ENCODE measurements at regions of chr14 and their contacts with region 1.

Region 1: DNA sequence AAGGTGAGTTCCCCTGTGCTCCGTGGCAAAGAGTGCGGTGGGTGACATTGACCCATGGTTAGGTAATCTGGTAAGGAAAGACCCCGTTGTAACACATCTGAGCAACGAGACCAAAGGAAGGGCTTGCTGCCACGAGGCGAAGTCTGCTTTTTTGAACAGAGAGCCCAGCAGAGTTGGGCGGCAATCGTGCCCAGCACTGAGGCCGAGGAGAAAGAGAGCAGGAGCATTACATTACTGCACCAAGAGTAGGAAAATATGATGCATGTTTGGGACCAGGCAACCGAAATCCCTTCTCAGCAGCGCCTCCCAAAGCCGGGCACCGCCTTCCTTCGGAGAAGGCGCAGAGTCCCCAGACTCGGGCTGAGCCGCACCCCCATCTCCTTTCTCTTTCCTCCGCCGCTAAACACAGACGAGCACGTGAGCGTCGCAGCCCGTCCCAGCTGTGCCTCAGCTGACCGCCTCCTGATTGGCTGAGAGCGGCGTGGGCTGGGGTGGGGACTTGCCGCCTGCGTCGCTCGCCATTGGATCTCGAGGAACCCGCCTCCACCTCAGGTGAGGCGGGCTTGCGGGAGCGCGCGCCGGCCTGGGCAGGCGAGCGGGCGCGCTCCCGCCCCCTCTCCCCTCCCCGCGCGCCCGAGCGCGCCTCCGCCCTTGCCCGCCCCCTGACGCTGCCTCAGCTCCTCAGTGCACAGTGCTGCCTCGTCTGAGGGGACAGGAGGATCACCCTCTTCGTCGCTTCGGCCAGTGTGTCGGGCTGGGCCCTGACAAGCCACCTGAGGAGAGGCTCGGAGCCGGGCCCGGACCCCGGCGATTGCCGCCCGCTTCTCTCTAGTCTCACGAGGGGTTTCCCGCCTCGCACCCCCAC is at the start of gene HIF1A:
- DNase-seq: peak; percentile 99
- H3K4me3 ChIP-seq: peak within 1 kb of the TSS; percentile 91
- H3K27ac ChIP-seq: peak within 1 kb of the TSS; percentile 74
- H3K4me1 ChIP-seq: peaks cover 37% of the 10 kb centered on the region
- CTCF ChIP-seq: peak; percentile 40; the same call in 1 of the 2 replicates
- total RNA-seq, gene HIF1A: 59.5 and 71.7 TPM in 2 replicates

Region 2: DNA sequence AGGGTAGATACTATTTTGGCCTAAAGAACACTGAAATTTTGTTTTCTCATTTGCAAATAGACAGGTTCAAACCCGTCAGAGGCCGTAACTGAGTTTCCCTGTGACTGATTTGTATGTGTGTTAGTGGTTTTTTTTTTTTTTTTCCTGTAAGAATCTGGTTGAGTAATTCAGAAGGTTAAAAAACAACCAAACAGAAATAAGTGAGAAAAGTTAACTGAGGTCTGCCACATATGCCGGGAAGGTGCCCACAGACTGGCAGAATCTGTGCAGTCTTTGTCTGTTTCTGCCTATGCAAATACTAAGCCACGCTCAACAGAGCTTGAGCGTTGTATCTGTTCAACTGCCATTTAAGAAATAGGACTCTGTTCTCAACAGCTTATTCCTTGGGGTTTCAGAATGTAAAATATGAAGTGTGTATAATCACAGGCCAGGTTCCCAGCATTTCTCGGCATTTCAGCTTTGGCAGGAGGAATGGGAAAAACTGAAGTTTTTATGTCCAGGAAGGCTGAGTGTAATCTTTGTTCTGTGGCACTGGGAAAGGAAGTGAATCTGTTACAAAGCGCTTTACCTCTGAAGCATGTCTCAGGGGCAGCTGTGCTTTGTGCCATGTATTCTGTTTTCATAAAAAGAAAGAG is 191.8 kb before region 1 on chr14:
- CTCF ChIA-PET with region 1: no interaction called
- POLR2A ChIA-PET with region 1: interaction called, 27 read pairs
- intact Hi-C with region 1: loop called (anchors 2 kb)
- DNase-seq: peak; percentile 94
- H3K4me3 ChIP-seq: peak overlapping the region; percentile 52
- H3K27ac ChIP-seq: peak overlapping the region; percentile 99
- H3K4me1 ChIP-seq: peaks cover 99% of the 10 kb centered on the region
- CTCF ChIP-seq: no peak; the same call in 1 of the 2 replicates

Region 3: DNA sequence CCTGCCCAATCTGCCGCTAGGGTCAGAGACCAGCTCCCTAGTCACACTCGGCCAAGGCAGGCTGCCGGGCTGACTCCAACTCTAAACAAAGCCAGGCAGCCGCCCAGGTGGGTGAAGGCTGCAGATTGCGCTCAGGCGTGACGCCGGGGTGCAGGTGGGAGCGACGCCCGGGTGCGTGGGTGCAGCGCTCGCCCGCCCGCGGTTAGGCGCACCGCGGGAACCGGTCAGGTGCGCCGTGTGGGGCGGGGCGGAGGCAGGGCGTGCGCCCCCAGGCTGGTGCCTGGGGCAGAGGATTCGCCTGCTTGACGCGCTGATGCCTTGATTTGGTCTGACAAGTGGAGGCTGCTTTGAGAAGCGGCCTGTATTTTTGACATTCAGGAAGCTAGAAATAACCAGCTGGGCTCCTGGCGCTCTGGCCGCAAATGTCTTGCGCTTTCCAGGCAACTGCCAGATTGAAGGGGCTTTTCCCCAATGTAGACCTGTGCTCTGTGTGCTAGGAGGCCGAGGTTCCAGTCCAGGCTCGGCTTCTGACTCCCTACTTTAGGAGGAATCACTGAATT is 126.4 kb before region 1 on chr14:
- CTCF ChIA-PET with region 1: no interaction called
- POLR2A ChIA-PET with region 1: interaction called, 7 read pairs
- intact Hi-C with region 1: loop called (anchors 1 kb)
- DNase-seq: peak; percentile 98
- H3K4me3 ChIP-seq: peak overlapping the region; percentile 53
- H3K27ac ChIP-seq: peak overlapping the region; percentile 93
- H3K4me1 ChIP-seq: peaks cover 77% of the 10 kb centered on the region
- CTCF ChIP-seq: peak; percentile 65

Region 4: DNA sequence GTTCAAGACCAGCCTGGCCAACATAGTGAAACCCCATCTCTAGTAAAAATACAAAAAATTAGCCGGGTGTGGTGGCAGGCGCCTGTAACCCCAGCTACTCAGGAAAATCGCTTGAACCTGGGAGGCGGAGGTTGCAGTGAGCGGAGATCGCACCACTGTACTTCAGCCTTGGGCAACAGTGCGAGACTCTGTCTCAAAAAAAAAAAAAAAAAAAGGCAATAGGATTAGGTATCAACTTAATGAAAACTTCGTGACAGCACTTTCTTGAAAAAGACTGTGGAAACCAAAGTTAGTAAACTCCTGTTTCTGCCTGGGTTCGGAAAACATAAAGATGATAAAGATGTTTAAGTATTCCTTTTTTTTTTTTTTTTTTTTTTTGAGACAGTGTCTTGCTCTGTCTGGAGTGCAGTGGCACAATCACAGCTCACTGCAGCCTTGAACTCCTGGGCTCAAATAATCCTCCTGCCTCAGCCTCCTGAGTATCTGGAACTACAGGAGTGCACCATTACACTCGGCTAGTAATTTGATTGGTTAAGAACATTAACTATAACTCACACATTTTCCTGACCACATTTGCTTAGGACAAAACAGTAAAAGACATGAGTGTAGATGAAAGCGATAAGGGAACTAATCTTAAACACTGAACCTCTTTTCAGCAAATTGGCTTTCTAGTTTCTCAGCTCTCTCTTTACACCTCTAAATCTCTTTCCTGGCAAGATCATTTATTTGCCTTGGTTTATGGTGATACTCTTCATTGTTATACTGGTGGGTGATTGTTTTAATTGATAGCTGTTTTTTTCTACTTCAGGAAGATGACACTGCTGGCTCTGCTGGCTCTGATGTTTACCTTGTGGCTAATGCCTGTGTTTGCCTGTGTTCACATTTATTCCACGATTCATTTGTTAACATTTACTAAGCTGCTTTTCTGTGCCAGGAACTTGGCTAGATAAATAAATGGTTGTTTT is 16.1 kb after region 1 on chr14:
- CTCF ChIA-PET with region 1: no interaction called
- POLR2A ChIA-PET with region 1: interaction called, 79 read pairs
- intact Hi-C with region 1: no loop called
- DNase-seq: peak; percentile 46
- H3K4me3 ChIP-seq: peak overlapping the region; percentile 18
- H3K27ac ChIP-seq: peak overlapping the region; percentile 9
- H3K4me1 ChIP-seq: peaks cover 76% of the 10 kb centered on the region
- CTCF ChIP-seq: no peak

Region 5: GRCh38 chr14:61750708-61751474 is 55.8 kb after region 1 on chr14:
- CTCF ChIA-PET with region 1: no interaction called
- POLR2A ChIA-PET with region 1: interaction called, 4 read pairs
- intact Hi-C with region 1: loop called (anchors 2 kb)
- DNase-seq: peak; percentile 92
- H3K4me3 ChIP-seq: peak overlapping the region; percentile 69
- H3K27ac ChIP-seq: peak overlapping the region; percentile 26
- H3K4me1 ChIP-seq: peaks cover 65% of the 10 kb centered on the region
- CTCF ChIP-seq: no peak

Region 6: GRCh38 chr14:61780125-61780524 is 85.1 kb after region 1 on chr14:
- CTCF ChIA-PET with region 1: no interaction called
- POLR2A ChIA-PET with region 1: no interaction called
- intact Hi-C with region 1: no loop called
- DNase-seq: no peak
- H3K4me3 ChIP-seq: no peak overlapping the region
- H3K27ac ChIP-seq: no peak overlapping the region
- H3K4me1 ChIP-seq: no peaks in the 10 kb centered on the region
- CTCF ChIP-seq: no peak